Activated CD4-positive, alpha-beta T cell treated with anti-CD3 and anti-CD28 coated beads for 36 hours (primary cell): ENCODE measurements at regions of chrX and their contacts with region 1.

Region 1: DNA sequence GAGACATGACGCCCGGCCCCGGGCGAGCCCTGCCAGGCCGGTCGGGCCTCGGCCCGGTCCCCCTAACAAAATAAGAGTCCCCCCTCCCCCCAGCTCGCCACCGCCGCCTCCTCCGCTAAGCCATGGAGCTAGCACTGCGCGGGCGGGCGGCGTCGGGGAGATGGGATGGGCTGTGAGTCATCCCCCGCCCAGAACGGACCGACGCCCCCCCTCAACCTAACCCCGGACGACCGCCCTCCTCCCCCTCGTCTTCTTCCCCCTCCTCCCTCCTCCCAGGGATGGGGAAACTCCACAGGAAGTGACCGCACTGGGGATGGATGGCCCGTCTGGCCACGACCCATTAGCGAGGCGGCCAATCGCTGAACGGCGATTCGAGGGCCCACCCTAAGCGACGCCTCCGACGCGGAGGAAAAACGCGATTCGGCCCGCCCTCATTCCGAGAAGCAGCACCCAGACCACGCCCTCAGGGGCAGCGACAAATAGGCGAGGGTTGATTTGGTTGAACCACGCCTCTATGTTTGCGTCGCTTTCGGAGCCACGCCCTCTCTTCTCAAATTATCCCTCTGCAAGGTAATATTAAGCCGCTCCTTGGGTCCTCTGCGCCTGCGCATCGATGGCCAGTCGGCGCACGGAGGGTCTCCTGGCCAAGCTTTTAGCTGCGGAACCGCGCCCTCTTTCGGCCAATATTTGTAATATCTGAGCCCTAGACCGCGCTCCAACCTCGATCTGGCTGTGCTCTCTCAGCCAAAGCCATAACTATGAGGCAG is at the start of gene TFE3:
- DNase-seq: peak; percentile 97
- ATAC-seq: peak; percentile 91
- H3K4me3 Mint-ChIP-seq: peak within 1 kb of the TSS; percentile 93
- H3K27ac Mint-ChIP-seq: peak within 1 kb of the TSS; percentile 94
- H3K4me1 Mint-ChIP-seq: peaks cover 41% of the 10 kb centered on the region
- H3K27me3 Mint-ChIP-seq: no peaks in the 10 kb centered on the region
- total RNA-seq, gene TFE3: 27.1 to 27.5 TPM

Region 2: DNA sequence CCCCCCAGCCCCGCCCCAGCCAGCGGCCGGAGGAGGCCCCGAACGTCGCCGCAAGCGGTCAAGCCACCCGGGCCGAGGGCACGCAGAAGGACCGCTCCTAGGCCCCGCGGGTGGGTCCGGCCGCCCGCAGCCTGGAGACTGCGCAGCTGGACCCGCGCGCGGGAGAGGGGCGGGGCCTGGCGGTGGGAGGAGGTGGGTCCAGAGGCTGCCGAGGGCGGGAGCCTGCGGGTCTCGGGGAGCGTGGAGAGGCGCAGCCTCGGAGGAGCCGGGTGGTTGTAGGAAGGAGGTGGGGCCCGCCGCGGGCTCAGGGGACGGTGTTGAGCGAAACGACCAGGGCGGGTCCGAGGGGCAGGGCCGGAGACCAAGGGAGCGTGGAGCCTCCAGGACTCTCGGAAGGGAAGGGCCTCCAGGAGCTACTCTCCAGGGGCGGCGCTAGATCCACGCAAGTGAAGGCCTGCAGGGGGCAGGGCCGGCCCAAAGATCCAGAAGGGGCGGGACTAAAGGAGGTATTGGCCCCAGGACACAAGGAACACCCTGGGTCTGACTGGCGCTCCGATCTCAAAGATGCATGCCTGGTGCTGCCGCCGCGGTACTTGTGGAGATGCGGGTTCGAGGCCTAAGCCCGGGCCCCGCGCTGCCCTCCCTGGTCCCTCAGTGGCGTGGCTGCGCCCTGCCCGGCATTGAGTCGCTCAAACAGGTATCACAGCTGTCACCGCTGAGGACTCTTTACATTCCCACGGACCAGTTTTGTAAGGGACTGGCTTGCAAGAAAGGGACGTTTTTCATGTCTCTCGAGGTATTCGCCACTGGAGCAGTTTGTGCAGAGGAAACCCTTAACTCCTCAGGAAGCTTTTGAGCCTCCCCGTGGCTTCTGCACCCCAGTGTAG is 151.8 kb before region 1 on chrX:
- CTCF ChIA-PET with region 1: no interaction called
- POLR2A ChIA-PET with region 1: no interaction called
- intact Hi-C with region 1: loop called in 1 of 2 experiments (anchors 1 kb)
- DNase-seq: peak; percentile 85
- ATAC-seq: peak; percentile 92
- H3K4me3 Mint-ChIP-seq: peak overlapping the region; percentile 79
- H3K27ac Mint-ChIP-seq: peak overlapping the region; percentile 55
- H3K4me1 Mint-ChIP-seq: peaks cover 23% of the 10 kb centered on the region
- H3K27me3 Mint-ChIP-seq: no peaks in the 10 kb centered on the region

Region 3: GRCh38 chrX:48911412-48912182 is 131.8 kb before region 1 on chrX and contains the start of gene SLC35A2:
- CTCF ChIA-PET with region 1: no interaction called
- POLR2A ChIA-PET with region 1: no interaction called
- intact Hi-C with region 1: loop called in 1 of 2 experiments (anchors 1 kb)
- DNase-seq: peak; percentile 93
- ATAC-seq: peak; percentile 69
- H3K4me3 Mint-ChIP-seq: peak within 1 kb of the TSS; percentile 97
- H3K27ac Mint-ChIP-seq: peak within 1 kb of the TSS; percentile 92
- H3K4me1 Mint-ChIP-seq: peaks cover 39% of the 10 kb centered on the region
- H3K27me3 Mint-ChIP-seq: no peaks in the 10 kb centered on the region
- total RNA-seq, gene SLC35A2: 19.7 to 20.3 TPM

Region 4: GRCh38 chrX:48957827-48958634 is 85.4 kb before region 1 on chrX:
- CTCF ChIA-PET with region 1: interaction called, 8 read pairs
- POLR2A ChIA-PET with region 1: no interaction called
- intact Hi-C with region 1: loop called (anchors 1 kb)
- DNase-seq: peak; percentile 95
- ATAC-seq: peak; percentile 92
- H3K4me3 Mint-ChIP-seq: peak overlapping the region; percentile 93
- H3K27ac Mint-ChIP-seq: peak overlapping the region; percentile 100
- H3K4me1 Mint-ChIP-seq: peaks cover 28% of the 10 kb centered on the region
- H3K27me3 Mint-ChIP-seq: no peaks in the 10 kb centered on the region

Region 5: GRCh38 chrX:49053223-49054072 is 10.0 kb after region 1 on chrX:
- CTCF ChIA-PET with region 1: interaction called, 4 read pairs
- POLR2A ChIA-PET with region 1: interaction called, 3 read pairs
- intact Hi-C with region 1: loop called in 1 of 2 experiments (anchors 1 kb)
- DNase-seq: peak; percentile 78
- ATAC-seq: peak; percentile 84
- H3K4me3 Mint-ChIP-seq: peak overlapping the region; percentile 74
- H3K27ac Mint-ChIP-seq: peak overlapping the region; percentile 84
- H3K4me1 Mint-ChIP-seq: peaks cover 34% of the 10 kb centered on the region
- H3K27me3 Mint-ChIP-seq: no peaks in the 10 kb centered on the region

Region 6: DNA sequence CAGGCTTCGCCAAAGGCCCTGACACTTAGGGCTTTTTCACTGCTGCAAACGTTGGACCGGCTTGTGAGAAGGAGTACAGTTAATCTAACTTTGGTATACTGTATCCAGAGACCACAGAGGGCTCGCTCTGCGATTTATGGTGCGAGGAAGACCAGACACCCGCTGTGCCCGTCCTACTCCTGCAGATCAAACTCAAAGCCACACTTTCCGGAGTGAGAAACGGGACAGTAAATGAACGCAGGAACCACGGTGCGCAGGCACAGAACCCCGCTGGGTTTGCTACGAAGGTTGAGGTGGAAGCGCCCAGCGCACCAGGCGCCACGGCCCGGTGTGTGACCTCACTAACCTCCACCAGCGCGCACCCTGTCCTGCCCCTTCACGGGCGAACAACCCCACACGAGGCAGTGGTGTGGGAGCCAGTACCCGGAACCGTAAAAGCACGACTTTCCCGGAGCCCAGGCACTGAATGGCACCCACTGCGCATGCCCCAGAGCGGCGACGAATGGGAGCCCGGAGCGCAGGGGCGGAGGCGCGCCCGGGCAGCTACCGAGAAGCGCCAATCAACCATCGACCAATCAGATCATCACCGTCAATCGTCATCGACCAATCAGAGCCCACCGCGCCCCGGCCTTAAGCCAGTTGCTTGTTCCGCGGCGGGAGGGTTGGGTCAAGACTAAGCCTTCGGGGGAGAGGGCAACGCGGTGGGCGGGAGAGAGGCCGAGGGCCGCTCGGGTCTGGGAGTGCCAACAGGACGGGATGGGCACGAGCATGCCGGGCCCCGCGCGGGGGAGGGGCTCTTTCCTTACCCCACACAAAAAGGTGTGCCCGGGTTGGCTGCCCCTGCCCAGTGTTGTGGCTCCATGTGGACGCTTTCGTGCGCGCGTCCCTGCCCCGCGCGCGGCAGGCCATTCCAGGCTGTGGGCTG is 57.6 kb after region 1 on chrX:
- CTCF ChIA-PET with region 1: no interaction called
- POLR2A ChIA-PET with region 1: no interaction called
- intact Hi-C with region 1: loop called in 1 of 2 experiments (anchors 1 kb)
- DNase-seq: peak; percentile 92
- ATAC-seq: peak; percentile 97
- H3K4me3 Mint-ChIP-seq: peak overlapping the region; percentile 85
- H3K27ac Mint-ChIP-seq: peak overlapping the region; percentile 89
- H3K4me1 Mint-ChIP-seq: peaks cover 7% of the 10 kb centered on the region
- H3K27me3 Mint-ChIP-seq: no peaks in the 10 kb centered on the region